CD8-positive, alpha-beta T cell (primary cell): ENCODE measurements at regions of chr6 and their contacts with region 1.

Region 1: DNA sequence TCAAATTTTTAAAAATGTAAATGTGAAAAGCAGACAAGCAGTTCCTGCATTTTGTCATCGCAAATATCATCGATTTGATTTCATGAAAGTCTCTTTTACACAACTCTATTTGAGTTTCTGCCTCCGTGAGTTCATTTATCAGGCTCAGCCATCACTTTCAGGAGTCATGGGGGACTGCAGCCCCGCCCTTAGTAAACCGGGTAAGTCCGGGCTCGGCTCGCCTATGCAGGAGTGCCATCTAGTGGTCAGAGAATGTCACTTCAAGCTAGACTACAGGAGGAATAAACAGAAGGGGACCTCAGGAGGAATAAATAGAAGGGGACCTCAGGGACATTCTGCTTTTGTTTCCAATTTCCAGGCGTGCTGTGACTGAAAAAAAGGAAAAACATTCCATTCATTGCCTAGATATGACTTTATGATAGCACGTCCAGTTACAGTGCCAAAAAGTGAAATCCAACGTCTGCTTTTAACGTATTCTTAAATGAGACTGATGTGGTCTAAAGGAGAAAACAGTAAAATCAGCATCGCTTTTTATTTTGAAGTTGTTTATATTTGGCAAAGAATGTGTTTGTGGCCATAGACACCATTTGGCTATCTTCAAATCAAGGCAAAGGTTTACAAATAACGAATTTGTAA is 333.9 kb downstream of the HACE1 start:
- DNase-seq: peak; percentile 6 to 79 (median 60)
- ATAC-seq: peak; percentile 99
- H3K4me3 ChIP-seq: peak overlapping the region in 1 of 2 experiments; percentile 18
- H3K4me3 Mint-ChIP-seq: peak overlapping the region; percentile 71
- H3K27ac ChIP-seq: no peak overlapping the region
- H3K27ac Mint-ChIP-seq: no peak overlapping the region
- H3K4me1 ChIP-seq: no peaks in the 10 kb centered on the region
- H3K4me1 Mint-ChIP-seq: no peaks in the 10 kb centered on the region
- H3K27me3 ChIP-seq: no peaks in the 10 kb centered on the region
- H3K27me3 Mint-ChIP-seq: peaks cover 15% of the 10 kb centered on the region
- CTCF ChIP-seq: peak; percentile 88

Region 2: DNA sequence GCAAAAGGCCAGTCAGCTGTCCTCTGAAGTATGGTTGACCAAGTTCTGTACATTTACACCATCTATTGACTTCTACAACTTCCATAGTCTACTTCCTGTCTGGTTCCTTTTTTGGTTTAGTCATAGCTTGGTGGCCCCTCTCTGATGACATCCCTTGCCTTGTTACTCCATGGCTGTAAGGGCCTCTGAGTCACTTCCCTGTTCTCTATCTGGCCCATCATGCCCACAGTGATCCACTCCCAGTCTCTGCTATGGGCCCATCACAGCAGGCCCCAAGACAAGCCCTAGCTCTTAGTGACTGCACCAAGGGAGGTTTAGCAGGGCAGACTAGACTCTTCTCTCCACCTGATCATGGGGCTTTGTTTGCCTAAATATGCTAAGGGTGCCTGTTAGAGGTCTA is 107.7 kb before region 1 on chr6:
- CTCF ChIA-PET with region 1: no interaction called
- POLR2A ChIA-PET with region 1: no interaction called
- intact Hi-C with region 1: no loop called
- DNase-seq: no peak
- ATAC-seq: no peak
- H3K4me3 ChIP-seq: no peak overlapping the region
- H3K4me3 Mint-ChIP-seq: no peak overlapping the region
- H3K27ac ChIP-seq: no peak overlapping the region
- H3K27ac Mint-ChIP-seq: no peak overlapping the region
- H3K4me1 ChIP-seq: no peaks in the 10 kb centered on the region
- H3K4me1 Mint-ChIP-seq: no peaks in the 10 kb centered on the region
- H3K27me3 ChIP-seq: no peaks in the 10 kb centered on the region
- H3K27me3 Mint-ChIP-seq: no peaks in the 10 kb centered on the region
- CTCF ChIP-seq: no peak

Region 3: DNA sequence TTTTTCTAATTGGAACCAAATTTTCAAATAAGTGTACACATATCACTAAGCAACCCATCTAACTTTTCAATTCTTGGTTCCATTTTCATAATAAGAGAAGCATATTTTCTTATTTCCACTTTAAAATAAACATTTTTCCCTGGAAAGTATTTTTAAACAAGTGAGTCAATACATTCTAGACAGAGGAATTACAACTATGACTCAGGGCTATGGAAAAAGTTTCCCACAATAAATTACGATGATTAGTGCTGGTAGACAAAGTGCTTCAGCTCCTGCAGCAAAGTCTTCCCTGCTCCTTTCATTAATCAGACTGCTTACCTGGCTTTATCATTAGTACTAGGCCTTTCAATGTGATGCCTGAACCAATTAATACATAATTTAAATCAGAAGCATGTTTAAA is 11.4 kb after region 1 on chr6:
- CTCF ChIA-PET with region 1: interaction called, 22 read pairs
- POLR2A ChIA-PET with region 1: no interaction called
- intact Hi-C with region 1: no loop called
- DNase-seq: no peak
- ATAC-seq: no peak
- H3K4me3 ChIP-seq: no peak overlapping the region
- H3K4me3 Mint-ChIP-seq: no peak overlapping the region
- H3K27ac ChIP-seq: no peak overlapping the region
- H3K27ac Mint-ChIP-seq: no peak overlapping the region
- H3K4me1 ChIP-seq: no peaks in the 10 kb centered on the region
- H3K4me1 Mint-ChIP-seq: no peaks in the 10 kb centered on the region
- H3K27me3 ChIP-seq: no peaks in the 10 kb centered on the region
- H3K27me3 Mint-ChIP-seq: peaks cover 5% of the 10 kb centered on the region
- CTCF ChIP-seq: no peak

Region 4: DNA sequence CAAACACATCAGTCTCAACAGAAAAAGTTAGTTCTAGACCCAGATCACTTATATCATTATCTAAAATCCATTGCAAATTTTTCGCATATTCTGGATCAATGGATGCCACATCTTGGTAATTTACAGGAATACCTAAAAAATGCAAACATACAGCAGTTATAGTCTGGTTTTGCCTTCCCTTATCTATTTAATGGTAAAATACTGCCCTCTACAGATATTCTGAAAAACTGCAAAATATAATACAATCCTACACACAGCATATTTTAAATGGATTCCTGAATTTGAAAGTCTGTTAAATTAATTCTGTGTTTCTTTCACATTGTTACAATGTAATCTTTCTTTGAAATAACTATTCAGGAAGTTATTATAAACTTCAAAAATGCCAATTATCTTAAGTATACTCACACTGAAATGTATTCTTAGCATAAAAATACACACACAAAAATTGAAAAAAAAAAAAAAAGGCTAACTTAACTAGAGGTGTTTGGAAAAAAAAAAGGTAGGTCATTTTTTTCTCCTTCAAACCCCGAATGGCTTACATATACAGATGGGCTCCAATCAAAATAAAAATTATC is 245.6 kb after region 1 on chr6:
- CTCF ChIA-PET with region 1: no interaction called
- POLR2A ChIA-PET with region 1: no interaction called
- intact Hi-C with region 1: loop called in 1 of 2 experiments (anchors 10 kb)
- DNase-seq: peak in 2 of 9 experiments; percentile 18 to 38
- ATAC-seq: peak; percentile 59
- H3K4me3 ChIP-seq: no peak overlapping the region
- H3K4me3 Mint-ChIP-seq: no peak overlapping the region
- H3K27ac ChIP-seq: no peak overlapping the region
- H3K27ac Mint-ChIP-seq: no peak overlapping the region
- H3K4me1 ChIP-seq: no peaks in the 10 kb centered on the region
- H3K4me1 Mint-ChIP-seq: no peaks in the 10 kb centered on the region
- H3K27me3 ChIP-seq: no peaks in the 10 kb centered on the region
- H3K27me3 Mint-ChIP-seq: no peaks in the 10 kb centered on the region
- CTCF ChIP-seq: peak; percentile 87